Naive thymus-derived CD8-positive, alpha-beta T cell (primary cell): ENCODE measurements at regions of chr15 and their contacts with region 1.

Region 1: DNA sequence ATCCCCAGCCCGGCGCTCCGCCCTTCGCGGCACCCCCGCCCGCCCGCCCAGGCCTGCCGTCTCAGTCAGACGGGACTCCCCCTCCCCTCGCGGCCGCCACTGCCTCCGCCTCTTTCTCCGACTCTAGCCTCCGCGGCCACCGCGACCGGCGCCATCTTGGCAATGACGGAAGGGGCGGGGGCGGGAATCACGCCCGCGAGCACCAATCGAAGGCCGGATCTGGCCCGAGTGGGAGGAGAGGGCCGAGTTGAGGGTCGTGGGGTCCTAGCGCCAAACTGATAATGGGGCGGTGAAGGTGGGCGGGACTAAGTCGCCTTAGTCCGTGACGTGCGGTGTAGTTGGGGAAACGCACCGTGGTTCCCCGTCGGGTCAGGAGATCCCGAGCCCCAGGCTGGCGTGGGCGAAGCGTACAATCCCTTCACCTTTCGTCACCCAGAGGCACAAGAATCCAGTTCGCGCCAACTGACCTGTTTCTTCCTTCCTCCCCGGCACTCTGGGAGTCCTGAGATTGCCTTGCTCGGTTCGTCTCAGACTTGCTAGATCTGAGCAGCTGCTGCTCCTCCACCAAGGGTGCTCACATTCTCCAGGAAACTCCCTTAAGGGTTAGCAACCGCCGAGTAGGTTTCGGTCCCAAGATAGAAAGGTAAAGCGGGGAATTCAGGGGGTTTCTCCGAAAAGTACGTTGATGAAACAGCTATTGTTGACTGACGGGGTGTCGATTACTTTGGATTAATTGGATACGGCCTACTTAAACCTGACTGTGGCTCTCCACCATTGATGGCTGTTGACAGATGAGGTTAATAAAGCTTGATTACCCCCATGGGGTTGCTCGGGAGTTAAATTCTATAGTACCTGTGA is at the start of gene DENND4A:
- DNase-seq: peak; percentile 96 to 99 (median 99)
- ATAC-seq: peak; percentile 76 to 81
- H3K4me3 Mint-ChIP-seq: peak within 1 kb of the TSS; percentile 85 to 99 (median 94)
- H3K27ac Mint-ChIP-seq: peak within 1 kb of the TSS; percentile 94 to 100 (median 98)
- H3K4me1 Mint-ChIP-seq: peaks cover 15 to 58% (median 37%) of the 10 kb centered on the region in 4 donors
- H3K27me3 Mint-ChIP-seq: no peaks in the 10 kb centered on the region
- polyA plus RNA-seq, gene DENND4A: 9.3 to 12.0 (median 11.2) TPM

Region 2: GRCh38 chr15:65778269-65778668 is 14.1 kb before region 1 on chr15:
- POLR2A ChIA-PET with region 1: interaction called, 13 read pairs
- DNase-seq: peak in 3 of 10 donors; percentile 37 to 54 (median 44)
- ATAC-seq: peak; percentile 57 to 72
- H3K4me3 Mint-ChIP-seq: peak overlapping the region; percentile 13 to 78 (median 44)
- H3K27ac Mint-ChIP-seq: peak overlapping the region; percentile 56 to 89 (median 81)
- H3K4me1 Mint-ChIP-seq: peaks cover 16 to 52% (median 38%) of the 10 kb centered on the region in 4 donors
- H3K27me3 Mint-ChIP-seq: no peaks in the 10 kb centered on the region

Region 3: GRCh38 chr15:65812916-65813315 is 20.6 kb after region 1 on chr15:
- POLR2A ChIA-PET with region 1: interaction called, 97 read pairs
- DNase-seq: no peak
- ATAC-seq: no peak
- H3K4me3 Mint-ChIP-seq: no peak overlapping the region
- H3K27ac Mint-ChIP-seq: peak overlapping the region in 2 of 10 donors; percentile 37 to 75
- H3K4me1 Mint-ChIP-seq: peaks cover 3 to 41% (median 14%) of the 10 kb centered on the region in 4 donors
- H3K27me3 Mint-ChIP-seq: no peaks in the 10 kb centered on the region

Region 4: GRCh38 chr15:65824031-65824743 is 31.8 kb after region 1 on chr15:
- POLR2A ChIA-PET with region 1: interaction called, 97 read pairs
- DNase-seq: peak in 1 of 10 donors; percentile 12
- ATAC-seq: no peak
- H3K4me3 Mint-ChIP-seq: no peak overlapping the region
- H3K27ac Mint-ChIP-seq: peak overlapping the region; percentile 22 to 77 (median 64)
- H3K4me1 Mint-ChIP-seq: peaks cover 25 to 71% (median 61%) of the 10 kb centered on the region in 4 donors
- H3K27me3 Mint-ChIP-seq: no peaks in the 10 kb centered on the region

Region 5: DNA sequence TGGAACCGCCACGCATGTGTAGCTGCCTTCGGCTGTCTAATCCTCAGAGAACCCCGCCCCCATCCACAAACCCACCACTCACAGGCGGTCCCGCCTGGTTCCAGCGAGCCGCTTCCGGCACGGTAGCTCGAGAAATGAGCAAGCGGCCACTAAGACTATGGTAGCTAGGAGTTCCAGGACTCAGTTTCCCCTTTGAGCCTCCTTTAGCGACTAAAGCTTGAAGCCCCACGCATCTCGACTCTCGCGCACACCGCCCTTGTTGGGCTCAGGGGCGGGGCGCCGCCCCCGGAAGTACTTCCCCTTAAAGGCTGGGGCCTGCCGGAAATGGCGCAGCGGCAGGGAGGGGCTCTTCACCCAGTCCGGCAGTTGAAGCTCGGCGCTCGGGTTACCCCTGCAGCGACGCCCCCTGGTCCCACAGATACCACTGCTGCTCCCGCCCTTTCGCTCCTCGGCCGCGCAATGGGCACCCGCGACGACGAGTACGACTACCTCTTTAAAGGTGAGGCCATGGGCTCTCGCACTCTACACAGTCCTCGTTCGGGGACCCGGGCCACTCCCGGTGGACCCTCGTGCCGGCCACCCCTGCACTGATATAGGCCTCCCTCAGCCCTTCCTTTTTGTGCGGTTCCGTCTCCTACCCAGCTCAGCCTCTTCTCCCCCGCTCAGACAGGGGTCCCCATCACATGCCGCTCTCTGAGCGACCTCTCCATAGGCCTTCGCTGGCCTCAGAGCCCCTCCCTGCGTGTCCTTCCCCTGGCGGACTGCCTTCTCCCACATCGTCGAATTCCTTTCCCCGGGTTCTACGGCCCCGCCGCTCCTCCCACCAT is 77.0 kb after region 1 on chr15 and contains the start of gene RAB11A:
- POLR2A ChIA-PET with region 1: interaction called, 23 read pairs
- DNase-seq: peak; percentile 92 to 98 (median 93)
- ATAC-seq: peak; percentile 91 to 92
- H3K4me3 Mint-ChIP-seq: peak within 1 kb of the TSS; percentile 93 to 100 (median 99)
- H3K27ac Mint-ChIP-seq: peak within 1 kb of the TSS; percentile 93 to 100 (median 99)
- H3K4me1 Mint-ChIP-seq: peaks cover 26 to 38% (median 33%) of the 10 kb centered on the region in 4 donors
- H3K27me3 Mint-ChIP-seq: peaks cover 0 to 4% (median 0%) of the 10 kb centered on the region in 5 donors
- polyA plus RNA-seq, gene RAB11A: 186 to 204 (median 186) TPM